ENCODE measurements at regions of chr9 and their contacts with region 1.

Region 1: GRCh38 chr9:71806901-71807307 is 38.6 kb upstream of the CEMIP2 start:
- DNase-seq: peak; percentile 29
- H3K4me3 ChIP-seq: no peak overlapping the region
- CTCF ChIP-seq: peak; percentile 91

Region 2: DNA sequence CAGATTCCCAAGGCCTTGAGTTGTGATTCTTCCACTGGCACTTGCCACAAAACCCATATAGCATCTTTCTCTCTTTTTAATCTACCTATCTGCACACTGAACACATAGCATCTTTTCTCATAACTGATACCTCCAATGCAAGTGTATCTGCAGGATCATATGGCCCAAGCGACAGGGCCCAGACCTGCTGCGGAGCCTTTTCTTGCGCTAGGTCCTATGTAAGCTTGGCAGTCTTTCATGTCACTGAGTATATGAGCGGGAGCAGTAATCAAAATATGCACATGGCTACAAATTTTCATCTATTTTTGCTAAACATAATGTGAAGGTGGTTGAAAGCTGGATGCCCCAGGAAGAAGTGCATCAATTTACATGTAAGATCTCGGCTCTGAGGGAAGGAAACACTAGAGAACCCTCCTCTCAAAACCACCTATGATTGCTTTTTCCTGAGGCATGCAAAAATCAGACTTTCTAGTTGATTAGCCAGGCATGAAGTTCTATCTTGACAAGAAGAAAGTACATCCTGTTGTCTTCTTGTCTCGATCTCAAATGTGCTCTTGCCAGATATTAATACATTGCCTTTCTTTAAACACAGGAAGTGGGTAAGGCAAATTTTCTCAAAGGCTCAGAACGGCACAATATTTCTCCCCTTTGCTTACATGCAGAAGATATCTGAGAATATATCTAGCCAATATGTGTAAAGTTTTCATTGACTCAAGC is 11.6 kb before region 1 on chr9:
- CTCF ChIA-PET with region 1: interaction called, 55 read pairs
- POLR2A ChIA-PET with region 1: no interaction called
- DNase-seq: no peak
- H3K4me3 ChIP-seq: no peak overlapping the region
- CTCF ChIP-seq: no peak

Region 3: GRCh38 chr9:71830153-71830552 is 23.2 kb after region 1 on chr9:
- CTCF ChIA-PET with region 1: interaction called, 10 read pairs
- POLR2A ChIA-PET with region 1: no interaction called
- DNase-seq: no peak
- H3K4me3 ChIP-seq: no peak overlapping the region
- CTCF ChIP-seq: no peak

Region 4: GRCh38 chr9:71984403-71984802 is 177.5 kb after region 1 on chr9:
- CTCF ChIA-PET with region 1: interaction called, 14 read pairs
- POLR2A ChIA-PET with region 1: no interaction called
- DNase-seq: peak; percentile 29
- H3K4me3 ChIP-seq: no peak overlapping the region
- CTCF ChIP-seq: no peak

Region 5: DNA sequence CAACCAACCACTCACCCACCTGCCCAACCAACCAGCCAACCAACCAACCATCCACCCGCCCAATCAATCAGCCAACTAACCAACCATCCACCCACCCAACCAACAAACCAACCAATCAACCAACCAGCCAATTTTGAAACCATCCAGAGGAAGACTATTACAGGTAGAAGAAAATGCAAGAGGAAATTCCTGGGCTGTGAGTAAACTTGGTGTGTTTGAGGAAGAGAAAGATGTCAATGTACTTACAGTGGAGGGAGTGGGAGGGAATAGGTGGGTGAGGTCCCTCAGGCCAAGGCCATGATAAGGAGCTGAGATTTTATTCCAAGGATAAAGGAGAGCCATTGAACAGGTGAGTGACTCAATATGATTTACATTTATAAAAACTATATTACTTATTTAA is 223.1 kb after region 1 on chr9:
- CTCF ChIA-PET with region 1: interaction called, 101 read pairs
- POLR2A ChIA-PET with region 1: no interaction called
- DNase-seq: no peak
- H3K4me3 ChIP-seq: no peak overlapping the region
- CTCF ChIP-seq: no peak